ENCODE measurements at regions of chr9 and their contacts with region 1.

Region 1: GRCh38 chr9:91949946-91950664 is at the start of gene ROR2:
- ATAC-seq: peak; percentile 71 to 90 (median 82)
- H3K4me3 ChIP-seq: peak within 1 kb of the TSS; percentile 32 to 54 (median 42)
- H3K27ac ChIP-seq: no peak within 1 kb of the TSS
- H3K4me1 ChIP-seq: peaks cover 4 to 14% of the 10 kb centered on the region in 2 donors
- total RNA-seq, gene ROR2: 0.32 to 26.3 (median 7.4) TPM

Region 2: DNA sequence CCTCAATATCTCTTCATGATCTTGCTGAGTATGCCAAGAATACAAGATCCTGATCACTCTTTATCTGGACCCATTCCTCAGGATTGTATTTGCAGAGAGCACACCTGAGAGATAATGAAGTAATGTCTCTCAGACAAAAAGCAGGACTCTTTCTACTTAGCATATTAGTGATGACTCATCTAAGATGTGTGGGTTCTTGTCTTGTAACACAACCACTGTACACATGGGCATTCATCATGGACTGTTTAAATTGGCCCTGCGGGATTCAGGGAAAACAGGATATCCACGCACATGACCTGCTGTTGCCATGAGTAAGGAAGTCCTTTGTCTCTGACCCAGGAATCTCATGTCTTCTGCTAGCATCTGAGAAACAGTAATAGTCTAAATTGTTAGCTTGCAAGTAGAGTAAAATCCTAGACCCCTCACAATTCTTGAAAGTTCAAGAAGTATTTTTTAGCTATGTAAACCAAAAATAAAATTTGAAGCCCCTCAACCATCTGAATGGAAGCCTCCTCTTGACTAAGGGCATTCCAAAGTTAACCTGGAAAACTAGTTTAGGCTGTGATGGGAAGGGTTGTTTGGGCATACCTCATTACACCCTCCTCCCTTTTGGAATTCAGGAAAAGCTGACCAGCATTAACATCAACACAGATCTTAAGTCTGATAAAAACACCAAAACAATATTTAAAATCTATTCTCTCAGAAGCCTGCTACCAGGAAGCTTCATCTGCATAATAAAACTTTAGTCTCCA is 498.4 kb before region 1 on chr9:
- in situ Hi-C with region 1: no loop called
- ATAC-seq: no peak
- H3K4me3 ChIP-seq: no peak overlapping the region
- H3K27ac ChIP-seq: no peak overlapping the region
- H3K4me1 ChIP-seq: no peaks in the 10 kb centered on the region

Region 3: DNA sequence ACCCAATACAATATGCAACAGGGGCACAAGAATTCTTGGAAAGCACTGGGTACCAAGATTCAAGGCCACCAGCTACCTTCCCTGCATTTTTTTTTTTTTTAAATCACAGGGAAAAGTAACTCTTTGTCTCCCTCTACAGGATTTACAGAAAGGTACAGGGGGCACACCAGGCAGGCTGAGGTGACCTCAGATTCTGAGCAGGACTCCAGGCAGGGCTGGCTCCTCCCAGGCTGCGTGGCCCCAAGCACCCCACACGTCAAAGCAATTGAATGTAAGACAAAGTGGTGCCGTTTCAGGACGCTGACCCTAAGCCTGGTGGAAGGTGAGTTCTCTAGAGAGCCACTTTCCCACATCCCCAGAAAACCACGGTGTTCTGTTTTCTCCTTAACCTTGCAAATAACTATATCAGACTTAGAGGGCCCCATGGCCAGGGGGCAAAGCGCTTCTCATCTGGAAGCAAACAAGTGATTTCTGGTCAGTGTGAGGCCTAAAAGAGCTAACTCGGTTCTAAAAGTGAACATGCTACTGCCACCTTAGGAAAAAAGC is 222.7 kb before region 1 on chr9:
- in situ Hi-C with region 1: loop called in 1 of 9 experiments (anchors 25 kb)
- ATAC-seq: peak; percentile 87 to 95 (median 90)
- H3K4me3 ChIP-seq: no peak overlapping the region
- H3K27ac ChIP-seq: no peak overlapping the region
- H3K4me1 ChIP-seq: no peaks in the 10 kb centered on the region

Region 4: GRCh38 chr9:91758491-91758981 is 191.6 kb before region 1 on chr9:
- in situ Hi-C with region 1: loop called in 2 of 9 experiments (anchors 25 kb)
- ATAC-seq: peak in 3 of 8 experiments; percentile 76 to 96 (median 84)
- H3K4me3 ChIP-seq: no peak overlapping the region
- H3K27ac ChIP-seq: no peak overlapping the region
- H3K4me1 ChIP-seq: no peaks in the 10 kb centered on the region

Region 5: GRCh38 chr9:91775011-91775707 is 174.9 kb before region 1 on chr9:
- in situ Hi-C with region 1: loop called in 3 of 9 experiments (anchors 10 to 25 kb)
- ATAC-seq: peak in 7 of 8 experiments; percentile 16 to 84 (median 75)
- H3K4me3 ChIP-seq: no peak overlapping the region
- H3K27ac ChIP-seq: no peak overlapping the region
- H3K4me1 ChIP-seq: peaks cover 7 to 12% of the 10 kb centered on the region in 2 donors

Measured in motor neuron (in vitro differentiated cells).